ENCODE measurements at regions of chr9 and their contacts with region 1.

Region 1: DNA sequence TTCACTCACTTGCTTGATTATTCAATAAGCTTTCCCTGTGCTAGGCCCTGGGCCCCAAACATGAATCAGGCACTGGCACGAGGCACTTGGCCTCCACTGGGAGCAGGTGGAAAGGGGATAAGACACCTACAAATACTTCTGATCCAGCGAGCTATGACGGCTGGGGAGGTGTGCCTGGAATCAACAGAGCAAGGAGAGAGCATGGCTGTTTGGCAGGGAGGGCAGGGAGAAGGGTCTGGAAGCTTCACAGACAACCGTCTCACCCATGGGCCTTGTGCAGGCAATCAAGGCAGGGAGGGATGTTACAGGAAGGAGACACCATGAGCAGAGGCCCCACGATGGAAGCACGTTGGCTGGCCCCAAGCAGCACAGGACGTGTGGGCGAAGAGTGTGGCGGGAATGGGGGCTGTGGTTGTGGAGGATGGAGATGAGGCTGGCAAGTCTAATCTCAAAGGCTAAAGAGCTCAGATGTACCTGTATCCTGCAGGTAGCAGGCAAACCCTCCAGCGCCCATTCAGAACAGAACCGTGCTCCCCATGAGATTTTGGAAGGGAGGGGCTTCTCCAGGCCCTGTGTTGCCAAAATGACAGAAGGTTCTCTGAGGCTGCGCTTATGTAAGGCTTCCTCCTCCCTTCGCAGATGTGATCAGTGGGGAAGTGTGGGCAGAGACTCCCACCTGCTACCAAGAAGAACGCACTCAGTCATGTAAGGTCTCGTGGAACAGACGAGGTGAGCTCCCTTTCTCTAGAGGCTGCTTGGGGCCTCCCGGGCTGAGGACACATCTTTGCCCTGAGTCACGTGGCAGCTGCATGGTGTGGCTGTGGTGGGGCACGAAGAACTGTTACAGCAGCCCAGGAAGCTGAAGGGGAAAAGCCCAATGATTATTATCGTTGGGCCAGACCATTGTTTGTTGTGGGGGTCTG is 189.7 kb downstream of the DAB2IP start:
- DNase-seq: no peak
- CTCF ChIP-seq: no peak

Region 2: DNA sequence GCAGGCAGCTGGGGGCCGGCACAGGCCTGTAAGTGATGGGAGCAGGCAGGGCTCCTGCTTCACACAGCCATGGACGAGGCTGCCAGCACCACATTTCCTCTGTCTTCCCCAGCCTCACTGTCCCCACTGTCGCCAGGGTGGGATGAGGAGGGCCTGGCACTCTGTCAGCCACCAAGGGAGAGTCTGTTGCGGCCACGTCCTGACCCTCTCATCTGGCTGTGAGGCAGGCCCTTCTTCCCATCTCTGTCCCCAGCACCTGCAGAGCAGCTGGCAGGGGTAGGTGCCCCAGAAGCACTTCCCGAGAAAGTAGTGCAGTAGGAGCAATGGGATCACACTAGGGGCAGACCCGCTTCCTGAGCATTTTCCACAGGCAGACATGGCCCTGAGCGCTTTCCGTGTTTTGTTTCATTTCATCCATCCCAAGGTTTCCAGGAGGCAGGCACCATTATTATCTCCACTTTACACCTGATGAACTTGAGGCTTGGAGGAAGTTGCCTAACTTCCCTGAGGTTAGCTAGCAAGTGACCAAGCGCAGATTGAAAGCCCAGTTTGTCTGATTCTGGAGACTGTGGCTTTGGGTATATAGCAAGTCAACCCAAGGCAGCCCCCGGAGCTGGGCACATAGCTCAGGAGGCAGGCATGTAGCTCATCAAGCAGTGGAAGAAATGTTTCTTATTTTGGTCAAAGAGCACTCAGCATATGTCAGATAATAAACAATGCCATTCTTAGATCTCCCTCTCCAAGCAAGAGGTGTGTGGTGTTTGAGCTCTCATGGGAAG is 12.7 kb after region 1 on chr9:
- CTCF ChIA-PET with region 1: interaction called, 10 read pairs
- POLR2A ChIA-PET with region 1: no interaction called
- DNase-seq: no peak
- CTCF ChIP-seq: no peak

Region 3: GRCh38 chr9:121863955-121864354 is 22.9 kb after region 1 on chr9:
- CTCF ChIA-PET with region 1: no interaction called
- POLR2A ChIA-PET with region 1: no interaction called
- DNase-seq: no peak
- CTCF ChIP-seq: no peak